A673 (cell line): ENCODE measurements at regions of chr16 and their contacts with region 1.

Region 1: DNA sequence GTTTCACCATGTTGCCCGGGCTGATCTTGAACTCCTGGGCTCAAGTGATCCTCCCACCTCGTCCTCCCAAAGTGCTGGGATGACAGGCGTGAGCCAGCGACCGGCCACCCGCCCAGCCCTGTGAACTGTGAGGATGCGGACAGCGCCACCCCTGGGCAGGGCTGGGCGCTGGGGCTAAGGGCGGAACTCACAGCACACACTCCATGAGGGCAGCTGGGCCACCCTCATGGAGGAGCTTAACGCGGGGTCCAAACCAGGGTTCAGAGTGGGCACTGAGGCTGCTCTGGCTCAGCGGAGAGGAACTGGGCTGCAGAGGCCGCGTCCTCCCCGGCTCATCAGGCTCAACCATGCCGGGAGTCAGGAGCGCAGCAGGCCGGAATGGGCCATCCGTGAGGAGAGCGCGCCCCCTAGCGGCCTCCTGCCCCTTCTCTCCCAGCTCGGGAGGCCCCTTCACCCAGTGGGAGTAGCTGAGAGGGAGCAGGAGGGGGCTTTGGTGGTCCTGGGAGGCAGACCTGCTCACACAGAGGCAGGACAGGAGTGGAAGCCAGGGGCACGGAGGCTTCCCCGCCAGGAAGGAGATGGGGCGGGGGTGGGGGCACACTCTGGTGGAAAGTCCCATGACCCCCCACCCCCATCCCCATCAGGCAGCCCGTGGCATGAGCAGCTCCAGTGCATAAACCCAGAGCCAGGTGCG is 13.8 kb downstream of the CORO7 start:
- DNase-seq: peak; percentile 84
- H3K4me3 ChIP-seq: peak overlapping the region; percentile 33
- H3K27ac ChIP-seq: no peak overlapping the region
- H3K4me1 ChIP-seq: no peaks in the 10 kb centered on the region
- H3K27me3 ChIP-seq: no peaks in the 10 kb centered on the region
- CTCF ChIP-seq: peak; percentile 96

Region 2: DNA sequence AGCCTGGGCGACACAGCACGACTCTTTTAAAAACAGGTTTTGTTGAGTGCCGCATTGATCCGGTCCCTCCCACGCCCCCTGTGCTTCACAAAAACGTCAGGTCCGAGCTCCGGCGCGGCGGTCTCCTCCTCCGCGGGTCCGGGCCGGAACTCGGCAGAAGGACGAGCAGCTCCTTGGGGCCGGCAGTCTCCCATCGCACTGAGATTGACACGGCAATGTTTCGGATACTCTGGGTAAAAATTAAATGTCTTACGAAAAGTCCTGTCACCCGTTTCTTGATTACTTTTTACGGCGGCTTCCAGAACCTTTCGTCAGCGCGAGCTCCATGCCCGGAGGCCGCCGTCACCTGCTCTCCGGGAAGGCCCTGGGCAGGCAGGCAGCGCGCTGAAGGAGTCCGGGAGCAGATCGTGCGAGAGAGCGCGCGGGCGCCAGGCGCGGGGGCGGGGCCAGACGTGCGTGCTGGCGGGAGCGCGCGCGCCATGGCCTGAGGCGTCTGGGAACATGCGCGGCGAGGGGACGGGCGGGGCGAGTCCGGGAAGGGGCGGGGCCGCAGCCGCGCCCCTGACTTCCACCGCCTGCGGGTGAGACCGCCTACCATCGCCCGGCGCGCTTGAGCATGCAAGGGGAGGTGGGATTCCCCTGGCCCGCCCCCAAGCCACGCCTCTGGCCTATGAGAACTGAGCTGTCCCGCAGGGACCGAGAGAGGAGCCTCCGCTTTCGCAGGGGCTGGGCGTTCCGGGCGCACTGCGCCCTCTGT is 149.0 kb before region 1 on chr16:
- CTCF ChIA-PET with region 1: interaction called, 19 read pairs
- POLR2A ChIA-PET with region 1: no interaction called
- intact Hi-C with region 1: no loop called
- DNase-seq: peak; percentile 100
- H3K4me3 ChIP-seq: peak overlapping the region; percentile 71
- H3K27ac ChIP-seq: peak overlapping the region; percentile 91
- H3K4me1 ChIP-seq: no peaks in the 10 kb centered on the region
- H3K27me3 ChIP-seq: no peaks in the 10 kb centered on the region
- CTCF ChIP-seq: no peak

Region 3: GRCh38 chr16:4288148-4288921 is 114.3 kb before region 1 on chr16:
- CTCF ChIA-PET with region 1: interaction called, 12 read pairs
- POLR2A ChIA-PET with region 1: interaction called, 3 read pairs
- intact Hi-C with region 1: loop called (anchors 1 kb)
- DNase-seq: peak; percentile 79
- H3K4me3 ChIP-seq: no peak overlapping the region
- H3K27ac ChIP-seq: no peak overlapping the region
- H3K4me1 ChIP-seq: peaks cover 3% of the 10 kb centered on the region
- H3K27me3 ChIP-seq: no peaks in the 10 kb centered on the region
- CTCF ChIP-seq: peak; percentile 98

Region 4: DNA sequence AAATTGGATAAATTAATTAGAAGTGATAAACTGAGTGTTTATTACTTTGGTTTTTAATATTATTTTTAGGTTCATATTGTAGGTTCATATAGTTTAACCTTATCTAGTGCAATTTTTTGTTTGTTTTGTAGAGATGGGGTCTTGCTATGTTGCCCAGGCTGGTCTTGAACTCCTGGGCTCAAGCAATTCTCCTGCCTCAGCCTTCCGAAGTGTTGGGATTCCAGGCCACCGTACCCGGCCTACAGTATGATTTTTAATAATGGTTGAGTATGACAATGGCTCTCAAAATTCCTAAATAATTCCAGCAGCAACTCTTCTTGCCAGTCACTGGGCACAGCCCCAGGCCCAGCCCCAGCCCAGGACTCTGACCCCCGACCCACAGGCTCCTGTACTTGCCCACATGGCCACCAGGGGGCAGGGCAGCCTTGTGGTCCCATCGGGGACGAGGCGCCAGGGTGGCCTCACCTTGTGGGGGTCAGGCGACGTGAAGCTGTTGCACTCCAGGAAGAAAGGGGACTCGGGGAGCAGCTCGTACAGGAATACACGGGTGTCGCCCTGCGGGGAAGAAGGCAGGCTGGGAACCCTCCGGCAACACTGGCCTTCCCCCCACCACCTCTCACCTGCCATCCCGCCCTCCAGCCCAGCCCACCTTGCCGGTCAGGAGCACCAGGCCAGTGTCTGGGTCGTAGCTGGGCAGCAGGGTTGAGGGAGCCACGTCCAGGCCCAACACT is 43.6 kb before region 1 on chr16:
- CTCF ChIA-PET with region 1: interaction called, 37 read pairs
- POLR2A ChIA-PET with region 1: no interaction called
- intact Hi-C with region 1: loop called (anchors 1 kb)
- DNase-seq: peak; percentile 61
- H3K4me3 ChIP-seq: no peak overlapping the region
- H3K27ac ChIP-seq: no peak overlapping the region
- H3K4me1 ChIP-seq: no peaks in the 10 kb centered on the region
- H3K27me3 ChIP-seq: no peaks in the 10 kb centered on the region
- CTCF ChIP-seq: peak; percentile 94

Region 5: DNA sequence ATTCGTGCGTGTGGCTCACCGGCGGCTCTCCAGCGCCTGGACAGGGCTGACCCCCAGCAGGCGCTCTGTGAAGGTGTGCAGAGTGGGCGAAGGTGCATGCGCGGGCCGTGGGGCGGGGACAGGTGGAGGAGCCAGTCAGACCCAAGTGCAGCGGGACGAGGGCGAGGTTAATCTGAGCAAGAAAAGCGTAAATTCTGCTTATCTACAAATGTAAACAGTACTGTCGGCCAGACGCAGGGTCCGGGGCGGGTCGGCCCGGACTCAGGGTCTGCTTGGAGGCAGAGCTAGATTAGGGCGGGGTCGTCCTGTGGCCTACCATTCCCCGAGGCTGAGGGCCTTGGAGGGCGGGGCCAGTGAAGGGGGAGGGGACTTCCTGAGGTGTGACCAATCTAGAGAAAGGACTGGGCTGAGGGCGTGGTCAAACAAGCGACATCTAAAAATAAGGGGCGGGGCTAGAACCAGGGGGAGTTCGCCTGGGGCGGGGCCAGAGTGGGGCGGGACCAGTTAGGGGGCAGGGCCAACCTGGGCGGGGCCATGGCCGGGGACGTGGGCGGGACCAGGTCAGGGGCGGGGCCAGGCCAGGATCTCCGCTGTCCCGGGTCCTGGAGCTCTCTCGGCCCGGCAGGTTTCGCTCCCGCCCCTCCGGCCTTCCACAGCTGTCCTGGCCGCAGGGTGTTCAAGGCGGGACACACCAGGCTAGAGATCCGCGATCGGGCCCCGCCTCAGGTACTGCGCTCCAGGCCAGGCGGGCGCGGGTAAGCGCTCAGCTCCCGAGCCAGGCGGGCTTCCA is 555.3 kb after region 1 on chr16 and contains the start of gene SEC14L5:
- CTCF ChIA-PET with region 1: no interaction called
- POLR2A ChIA-PET with region 1: no interaction called
- intact Hi-C with region 1: loop called (anchors 10 kb)
- DNase-seq: peak; percentile 96
- H3K4me3 ChIP-seq: peak within 1 kb of the TSS; percentile 48
- H3K27ac ChIP-seq: no peak within 1 kb of the TSS
- H3K4me1 ChIP-seq: no peaks in the 10 kb centered on the region
- H3K27me3 ChIP-seq: peaks cover 35% of the 10 kb centered on the region
- CTCF ChIP-seq: no peak
- total RNA-seq, gene SEC14L5: 0.04 TPM in 1 of 2 replicates, not detected in the other